ENCODE measurements at regions of chr4 and their contacts with region 1.

Region 1: DNA sequence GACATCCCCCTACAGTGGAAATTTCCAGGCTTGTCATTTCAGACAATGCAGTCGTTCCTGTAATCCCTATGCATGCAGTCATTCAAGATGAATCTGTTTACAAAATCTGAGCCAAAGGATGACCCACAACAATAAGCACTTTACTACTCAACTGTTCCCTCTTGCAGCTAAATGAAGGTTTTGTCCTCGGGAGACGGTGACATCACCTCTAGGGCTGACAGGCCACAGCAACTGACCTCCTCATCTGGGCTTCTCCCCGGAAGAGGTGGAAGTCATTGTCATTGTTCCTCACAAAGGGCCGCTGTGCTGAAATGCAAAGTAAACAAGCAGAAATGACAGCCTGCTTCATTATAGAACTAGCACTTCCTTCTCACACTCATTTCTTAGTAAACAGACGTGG is 29.2 kb downstream of the CLRN2 start:
- DNase-seq: no peak
- H3K4me3 ChIP-seq: no peak overlapping the region
- H3K27ac ChIP-seq: no peak overlapping the region
- H3K4me1 ChIP-seq: no peaks in the 10 kb centered on the region
- H3K27me3 ChIP-seq: no peaks in the 10 kb centered on the region
- CTCF ChIP-seq: no peak

Region 2: DNA sequence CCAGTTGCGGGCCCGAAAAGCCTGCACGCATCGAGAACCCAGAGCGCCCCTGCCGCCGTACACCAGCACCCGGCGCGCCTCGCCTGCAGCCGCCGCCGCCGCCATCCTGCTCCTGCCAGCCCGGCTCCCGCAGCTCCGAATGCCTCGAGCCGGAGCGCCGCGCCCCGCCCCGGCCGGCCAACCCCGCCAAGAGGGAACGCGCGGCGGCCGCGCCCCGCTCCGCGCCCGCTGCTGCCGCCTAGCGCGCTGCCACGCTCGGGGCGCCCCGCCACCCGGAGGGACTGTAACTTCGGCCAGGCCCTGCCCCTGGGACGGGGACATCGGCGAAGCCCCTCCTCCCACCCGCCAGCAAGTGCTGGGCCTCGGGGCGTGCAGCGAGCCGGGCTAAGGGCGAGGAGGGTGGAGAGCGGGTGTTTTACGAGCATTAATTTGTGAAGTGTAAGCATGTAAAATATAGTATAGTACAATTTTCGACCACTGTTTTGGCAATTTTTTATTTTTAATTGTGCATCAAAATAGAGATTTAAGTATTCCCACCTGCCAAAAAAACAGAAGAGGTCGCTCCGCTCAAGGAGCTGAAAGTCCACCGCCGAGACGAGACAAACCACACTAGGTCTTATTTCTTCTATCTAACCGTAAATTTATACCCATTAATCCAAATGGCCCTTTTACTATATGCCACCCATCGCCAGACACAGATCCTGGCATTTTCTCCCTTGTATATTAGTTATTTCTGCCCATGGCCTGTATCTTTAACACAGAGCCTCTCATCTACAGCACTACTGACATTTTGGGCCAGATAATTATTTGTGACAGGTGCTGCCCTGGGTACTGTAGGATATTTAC is 32.0 kb before region 1 on chr4 and contains the start of gene QDPR:
- intact Hi-C with region 1: loop called (anchors 2 kb)
- DNase-seq: peak; percentile 37 to 89
- H3K4me3 ChIP-seq: peak within 1 kb of the TSS; percentile 75 to 100
- H3K27ac ChIP-seq: peak within 1 kb of the TSS; percentile 65 to 80
- H3K4me1 ChIP-seq: peaks cover 3 to 16% of the 10 kb centered on the region in 2 donors
- H3K27me3 ChIP-seq: no peaks in the 10 kb centered on the region
- CTCF ChIP-seq: peak; percentile 17 to 44 (median 34)
- total RNA-seq, gene QDPR: 32.7 TPM

Region 3: GRCh38 chr4:17576932-17577665 is 32.9 kb after region 1 on chr4 and contains the start of gene LAP3:
- intact Hi-C with region 1: loop called (anchors 2 kb)
- DNase-seq: peak; percentile 87 to 99
- H3K4me3 ChIP-seq: peak within 1 kb of the TSS; percentile 86 to 96
- H3K27ac ChIP-seq: peak within 1 kb of the TSS; percentile 96 to 97
- H3K4me1 ChIP-seq: peaks cover 7 to 17% of the 10 kb centered on the region in 2 donors
- H3K27me3 ChIP-seq: no peaks in the 10 kb centered on the region
- CTCF ChIP-seq: no peak
- total RNA-seq, gene LAP3: 60.3 TPM

Region 4: DNA sequence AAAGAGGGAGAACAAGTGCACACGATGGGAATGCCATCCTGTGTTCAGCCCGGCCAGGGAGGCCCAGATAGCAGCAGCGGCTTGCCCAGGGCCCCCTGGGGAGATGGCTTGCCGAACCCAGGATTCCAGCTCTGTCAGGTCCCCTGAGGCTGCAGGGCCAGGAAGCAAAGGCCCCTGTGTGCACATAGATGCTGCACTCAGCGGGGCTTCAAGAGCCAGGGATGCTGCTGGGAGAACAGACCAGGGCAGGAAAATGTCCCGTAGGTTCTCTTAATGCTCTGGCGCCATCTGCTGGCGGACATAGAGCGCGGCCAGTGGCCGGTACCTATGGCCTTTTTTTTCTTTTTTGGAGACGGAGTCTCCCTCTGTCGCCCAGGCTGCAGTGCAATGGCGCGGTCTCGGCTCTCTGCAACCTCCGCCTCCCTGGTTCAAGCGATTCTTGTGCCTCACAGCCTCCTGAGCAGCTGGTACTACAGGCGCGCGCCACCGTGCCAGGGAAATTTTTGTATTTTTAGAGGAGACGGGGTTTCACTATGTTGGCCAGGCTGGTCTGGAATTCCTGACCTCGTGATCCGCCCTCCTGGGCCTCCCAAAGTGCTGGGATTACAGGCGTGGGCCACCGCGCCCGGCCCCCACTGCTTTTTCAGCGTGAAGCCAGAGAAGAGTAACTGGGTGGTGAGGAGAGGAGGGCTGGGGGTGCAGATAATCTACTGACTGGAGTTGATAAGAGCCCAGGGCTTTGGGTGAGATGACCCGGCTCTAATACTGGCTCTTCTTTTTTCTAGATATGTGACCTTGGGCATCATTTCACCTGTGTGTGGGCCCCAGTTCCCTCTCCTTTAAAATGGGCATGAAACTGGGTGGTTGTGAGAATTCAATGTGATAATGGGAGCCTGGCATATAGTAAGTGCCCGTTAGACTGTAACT is 92.8 kb after region 1 on chr4:
- intact Hi-C with region 1: loop called (anchors 1 kb)
- DNase-seq: peak; percentile 21 to 80
- H3K4me3 ChIP-seq: no peak overlapping the region
- H3K27ac ChIP-seq: no peak overlapping the region
- H3K4me1 ChIP-seq: no peaks in the 10 kb centered on the region
- H3K27me3 ChIP-seq: no peaks in the 10 kb centered on the region
- CTCF ChIP-seq: peak; percentile 57 to 89 (median 80)

Region 5: DNA sequence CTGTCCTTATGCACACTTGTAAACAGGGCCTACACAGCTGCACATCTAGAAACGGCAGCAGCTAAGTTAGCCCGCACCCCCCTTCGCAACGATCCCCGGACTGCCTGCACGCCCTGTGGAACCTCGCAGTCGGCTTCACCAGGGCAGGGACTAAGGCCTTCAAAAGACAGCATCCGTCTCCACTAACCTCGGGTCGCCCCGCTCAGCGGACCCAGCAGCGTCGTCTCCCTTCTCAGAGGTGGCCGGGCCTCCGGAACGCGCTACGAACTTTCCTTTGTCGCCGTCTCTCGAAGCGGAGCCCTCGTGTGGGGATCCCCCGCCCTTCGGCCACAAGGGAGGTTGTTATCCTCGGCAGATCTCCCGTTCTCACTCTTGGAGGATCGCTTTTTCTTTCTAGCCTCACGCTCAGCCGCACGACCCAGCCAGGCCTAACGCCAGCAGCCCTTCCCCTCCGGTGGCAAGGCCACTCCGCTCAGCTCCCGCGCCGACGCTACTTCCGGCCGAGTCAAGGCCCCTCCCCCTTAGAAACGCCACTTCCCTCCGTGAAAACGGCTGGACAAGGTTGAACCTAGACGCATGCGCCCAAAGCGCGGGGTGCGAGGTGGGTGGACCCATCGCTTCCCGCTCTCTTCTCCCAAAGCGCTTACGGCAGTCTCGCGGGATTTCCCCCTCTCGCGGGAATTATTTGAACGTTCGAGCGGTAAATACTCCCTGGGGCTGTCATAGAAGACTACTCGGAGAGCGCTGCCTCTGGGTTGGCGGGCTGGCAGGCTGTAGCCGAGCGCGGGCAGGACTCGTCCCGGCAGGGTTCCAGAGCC is 266.3 kb after region 1 on chr4 and contains the starts of genes DCAF16 and NCAPG:
- intact Hi-C with region 1: loop called (anchors 1 kb)
- DNase-seq: peak; percentile 95 to 100
- H3K4me3 ChIP-seq: peak within 1 kb of the TSS; percentile 72 to 83
- H3K27ac ChIP-seq: peak within 1 kb of the TSS; percentile 91 to 94
- H3K4me1 ChIP-seq: peaks cover 9 to 26% of the 10 kb centered on the region in 2 donors
- H3K27me3 ChIP-seq: no peaks in the 10 kb centered on the region
- CTCF ChIP-seq: no peak
- total RNA-seq, gene DCAF16: 7.9 TPM
- total RNA-seq, gene NCAPG: not detected

Region 6: DNA sequence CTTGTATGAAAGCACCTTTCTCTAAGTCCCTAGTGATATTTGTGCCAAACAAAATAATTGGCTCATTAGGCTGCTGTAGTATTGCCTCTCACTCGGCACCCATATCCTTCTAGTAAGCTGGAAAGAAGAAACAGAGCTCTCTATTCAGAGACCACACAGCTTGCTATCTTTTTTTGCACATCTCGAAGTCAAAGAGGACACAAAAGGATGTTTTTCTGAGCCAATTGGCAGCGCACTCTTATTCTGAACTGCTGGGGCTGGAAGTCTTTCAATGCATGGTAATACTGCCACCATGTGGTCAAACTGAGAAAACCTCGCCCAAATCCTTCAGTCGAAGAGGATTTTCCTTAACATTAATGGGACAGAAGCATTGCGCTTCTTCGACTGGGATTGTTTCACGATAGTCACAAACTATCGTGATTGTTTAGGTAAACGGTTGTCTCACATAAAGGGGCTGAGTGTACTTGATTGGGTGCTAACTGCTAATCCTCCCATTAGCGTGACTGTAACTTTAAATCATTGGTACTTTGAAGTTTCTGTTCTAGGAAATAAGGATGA is 1049.3 kb after region 1 on chr4:
- intact Hi-C with region 1: loop called (anchors 5 kb)
- DNase-seq: no peak
- H3K4me3 ChIP-seq: no peak overlapping the region
- H3K27ac ChIP-seq: no peak overlapping the region
- H3K4me1 ChIP-seq: no peaks in the 10 kb centered on the region
- H3K27me3 ChIP-seq: no peaks in the 10 kb centered on the region
- CTCF ChIP-seq: peak; percentile 37 to 76 (median 55)

Measured in ascending aorta (tissue), 2 donors.